ENCODE measurements at regions of chr20 and their contacts with region 1.

Region 1: DNA sequence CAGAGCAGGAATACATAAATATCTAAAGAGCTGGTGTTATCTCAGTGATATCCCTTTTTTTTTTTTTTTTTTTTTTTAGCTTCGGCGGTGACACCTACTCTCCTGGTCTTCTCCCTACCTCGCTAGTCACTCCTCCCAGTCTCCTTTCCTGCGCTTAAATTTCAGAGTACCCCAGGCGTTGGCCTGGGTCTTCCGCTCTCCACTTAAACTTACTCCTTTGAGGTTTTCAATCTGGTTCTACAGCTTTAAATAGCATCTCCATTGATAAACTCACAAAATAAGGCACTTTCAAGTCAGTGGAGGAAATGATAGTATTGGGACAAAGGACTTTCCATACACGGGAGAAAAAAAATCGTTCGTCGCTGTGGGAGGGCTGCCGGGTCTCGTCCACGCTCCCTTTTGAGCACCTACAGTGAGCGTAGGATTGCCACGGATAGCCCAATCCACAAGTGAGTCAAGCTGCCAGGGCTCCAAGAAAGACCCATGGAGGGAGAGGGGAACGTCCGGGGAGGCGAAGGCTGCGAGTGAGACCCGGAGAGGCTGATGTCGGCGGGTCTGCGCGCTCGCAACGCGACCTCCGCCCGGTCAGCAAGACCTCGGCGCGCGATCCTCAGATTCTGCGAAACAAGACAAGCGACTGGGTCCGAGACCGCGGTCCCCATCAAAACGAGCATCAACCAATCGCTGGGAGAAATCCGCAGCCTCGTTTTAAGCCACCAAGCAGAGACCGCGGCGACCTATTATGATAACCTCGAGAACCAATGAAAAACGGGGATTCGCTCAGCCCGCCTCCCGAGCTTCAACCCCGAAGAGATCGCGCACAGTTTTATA is 672 bp upstream of the SRSF6 start:
- DNase-seq: peak; percentile 78 to 91 (median 86)
- H3K4me3 ChIP-seq: peak overlapping the region; percentile 99
- H3K4me3 Mint-ChIP-seq: peak overlapping the region; percentile 90 to 99 (median 95)
- H3K27ac ChIP-seq: peak overlapping the region; percentile 99
- H3K27ac Mint-ChIP-seq: peak overlapping the region; percentile 93 to 100 (median 98)
- H3K4me1 ChIP-seq: peaks cover 25% of the 10 kb centered on the region
- H3K4me1 Mint-ChIP-seq: peaks cover 29 to 42% (median 37%) of the 10 kb centered on the region in 3 donors
- H3K27me3 ChIP-seq: no peaks in the 10 kb centered on the region
- H3K27me3 Mint-ChIP-seq: peaks cover 17 to 20% of the 10 kb centered on the region in 2 donors

Region 2: DNA sequence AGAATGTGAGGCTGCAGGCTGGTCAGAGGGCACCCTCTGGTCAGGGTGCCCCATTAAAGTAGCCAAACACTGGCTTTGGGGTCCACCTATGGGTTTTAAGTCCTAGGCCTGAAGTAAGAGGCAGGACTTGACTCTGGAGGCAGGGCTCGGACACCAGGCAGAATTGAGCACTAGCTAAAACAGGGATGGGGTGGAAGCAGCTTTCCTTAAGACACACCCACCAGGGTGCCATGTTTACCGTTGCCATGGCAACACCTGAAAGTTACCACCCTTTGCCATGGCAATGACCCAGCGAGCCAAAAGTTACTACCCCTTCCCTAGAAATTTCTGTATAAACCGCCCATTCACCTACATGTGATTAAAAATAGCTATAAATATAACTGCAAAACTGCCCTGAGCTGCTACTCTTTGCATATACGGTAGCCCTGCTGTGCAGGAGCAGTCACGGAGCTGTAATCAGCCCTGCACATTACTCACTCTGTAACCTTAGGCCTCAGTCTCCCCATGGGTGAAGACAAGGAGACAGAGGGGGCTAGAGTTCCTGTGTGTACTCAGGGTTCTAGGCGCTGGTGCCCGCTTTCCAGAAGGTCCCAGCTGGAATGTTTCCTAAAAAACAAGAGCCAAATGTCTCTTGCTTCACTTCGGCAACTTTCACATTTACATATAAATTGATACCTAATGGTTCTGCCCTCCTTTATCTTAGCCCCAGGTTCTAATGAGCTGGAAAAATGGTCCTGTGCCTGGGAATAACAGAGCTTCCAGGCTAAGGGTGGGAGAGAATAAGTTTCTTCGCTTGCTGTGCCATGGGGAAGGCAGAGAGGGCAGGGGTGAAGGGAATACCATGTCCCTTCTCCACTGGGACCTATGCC is 26.5 kb before region 1 on chr20:
- CTCF ChIA-PET with region 1: no interaction called
- POLR2A ChIA-PET with region 1: no interaction called
- DNase-seq: no peak
- H3K4me3 ChIP-seq: no peak overlapping the region
- H3K4me3 Mint-ChIP-seq: peak overlapping the region in 1 of 7 donors; percentile 9
- H3K27ac ChIP-seq: no peak overlapping the region
- H3K27ac Mint-ChIP-seq: peak overlapping the region in 1 of 8 donors; percentile 3
- H3K4me1 ChIP-seq: no peaks in the 10 kb centered on the region
- H3K4me1 Mint-ChIP-seq: no peaks in the 10 kb centered on the region
- H3K27me3 ChIP-seq: no peaks in the 10 kb centered on the region
- H3K27me3 Mint-ChIP-seq: peaks cover 22 to 48% of the 10 kb centered on the region in 2 donors

Region 3: GRCh38 chr20:43514062-43514999 is 57.3 kb after region 1 on chr20:
- CTCF ChIA-PET with region 1: interaction called, 4 read pairs
- POLR2A ChIA-PET with region 1: interaction called, 23 read pairs
- DNase-seq: peak; percentile 83 to 95 (median 93)
- H3K4me3 ChIP-seq: peak overlapping the region; percentile 66
- H3K4me3 Mint-ChIP-seq: peak overlapping the region; percentile 89 to 96 (median 94)
- H3K27ac ChIP-seq: peak overlapping the region; percentile 38
- H3K27ac Mint-ChIP-seq: peak overlapping the region; percentile 76 to 94 (median 88)
- H3K4me1 ChIP-seq: peaks cover 14% of the 10 kb centered on the region
- H3K4me1 Mint-ChIP-seq: peaks cover 16 to 28% (median 19%) of the 10 kb centered on the region in 3 donors
- H3K27me3 ChIP-seq: no peaks in the 10 kb centered on the region
- H3K27me3 Mint-ChIP-seq: peaks cover 1 to 3% of the 10 kb centered on the region in 2 donors

Measured in CD8-positive, alpha-beta memory T cell (primary cell).